ENCODE measurements at regions of chr5 and their contacts with region 1.

Region 1: DNA sequence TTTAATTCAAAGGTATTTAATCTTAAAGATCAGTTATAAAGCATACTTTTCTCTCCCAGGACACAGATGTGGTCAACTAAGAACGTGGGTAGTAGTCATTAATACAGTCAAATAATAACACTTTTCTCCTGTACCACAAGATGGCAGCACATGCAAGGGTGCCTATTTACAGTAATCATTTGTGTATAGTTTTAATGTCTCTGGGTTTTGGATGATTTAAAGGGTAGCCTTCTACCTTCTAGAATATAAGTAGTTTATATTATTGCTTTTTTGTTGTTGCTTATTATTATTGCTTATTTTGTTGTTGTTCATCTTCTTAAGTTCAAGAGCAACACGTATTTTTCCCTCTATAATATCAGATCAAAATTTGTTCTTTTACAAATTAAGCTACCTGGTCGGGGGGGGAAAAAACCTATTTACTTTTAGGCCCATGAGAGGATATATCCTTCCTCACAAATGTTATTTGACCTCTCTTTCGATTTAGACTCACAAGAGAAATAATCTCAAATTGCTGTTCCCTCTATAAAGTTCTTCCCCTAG is 59.6 kb upstream of the SLC27A6 start:
- DNase-seq: peak; percentile 33
- CTCF ChIP-seq: peak; percentile 75

Region 2: GRCh38 chr5:128836571-128836970 is 69.1 kb before region 1 on chr5:
- CTCF ChIA-PET with region 1: no interaction called
- POLR2A ChIA-PET with region 1: no interaction called
- DNase-seq: no peak
- CTCF ChIP-seq: no peak

Region 3: GRCh38 chr5:128895581-128895980 is 10.1 kb before region 1 on chr5:
- CTCF ChIA-PET with region 1: interaction called, 12 read pairs
- POLR2A ChIA-PET with region 1: no interaction called
- DNase-seq: no peak
- CTCF ChIP-seq: no peak

Region 4: DNA sequence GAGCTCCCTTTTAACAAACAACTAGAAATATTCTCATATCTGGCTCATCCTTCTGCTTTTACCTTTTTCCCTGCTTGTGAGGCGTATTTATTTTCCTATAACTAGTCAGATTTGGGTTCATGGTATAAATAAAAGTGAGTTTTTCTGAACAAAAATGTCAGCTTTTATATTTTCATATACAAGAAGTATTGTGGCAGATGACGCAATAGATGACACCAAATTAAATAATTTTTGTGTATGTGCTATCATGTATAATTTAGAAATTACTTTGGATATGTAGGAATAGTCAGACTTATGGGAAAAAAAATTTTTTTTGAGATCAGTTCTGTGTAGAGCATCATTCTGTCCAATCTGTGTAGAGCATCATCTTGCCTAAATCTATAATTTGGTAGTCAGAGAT is 13.9 kb after region 1 on chr5:
- CTCF ChIA-PET with region 1: interaction called, 11 read pairs
- POLR2A ChIA-PET with region 1: no interaction called
- DNase-seq: no peak
- CTCF ChIP-seq: no peak

Region 5: DNA sequence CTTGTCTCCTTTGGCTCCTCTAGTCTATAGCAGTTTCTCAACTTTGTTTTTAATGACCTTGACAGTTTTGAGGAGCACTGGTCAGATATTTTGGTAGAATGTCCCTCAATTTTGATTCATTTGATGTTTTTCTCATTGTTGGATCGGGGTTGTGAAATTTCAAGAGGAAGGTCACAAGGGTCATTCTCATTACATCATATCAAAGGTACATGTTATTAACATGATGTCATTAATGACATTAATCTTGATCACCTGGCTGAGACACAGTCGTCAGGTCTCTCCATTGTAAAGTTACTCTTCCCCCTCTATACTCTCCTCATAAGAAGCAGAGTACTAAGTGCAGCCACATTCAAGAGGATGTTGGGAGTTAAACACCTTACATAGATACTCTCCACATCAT is 196.2 kb after region 1 on chr5:
- CTCF ChIA-PET with region 1: no interaction called
- POLR2A ChIA-PET with region 1: no interaction called
- DNase-seq: no peak
- CTCF ChIP-seq: no peak

Region 6: DNA sequence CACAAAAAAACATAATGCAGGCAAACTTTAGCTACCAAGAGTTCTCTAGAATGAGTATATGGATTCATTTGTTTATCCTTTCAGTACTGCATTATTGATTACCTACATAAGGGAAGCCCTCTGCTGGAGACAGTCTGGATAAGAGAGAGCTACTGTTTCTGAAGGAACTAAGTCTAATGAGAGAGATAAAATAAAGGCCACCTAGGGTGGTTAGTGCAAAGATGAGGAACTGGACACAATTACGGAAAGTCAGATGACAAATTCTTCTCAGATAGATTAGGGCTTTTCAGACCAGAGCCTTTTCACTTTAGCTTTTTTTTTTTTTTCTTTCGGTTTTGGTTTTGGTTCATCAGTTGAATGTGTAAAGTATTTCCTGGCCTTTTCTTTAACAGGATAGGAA is 220.2 kb after region 1 on chr5:
- CTCF ChIA-PET with region 1: interaction called, 35 read pairs
- POLR2A ChIA-PET with region 1: no interaction called
- DNase-seq: peak; percentile 25
- CTCF ChIP-seq: no peak

Region 7: DNA sequence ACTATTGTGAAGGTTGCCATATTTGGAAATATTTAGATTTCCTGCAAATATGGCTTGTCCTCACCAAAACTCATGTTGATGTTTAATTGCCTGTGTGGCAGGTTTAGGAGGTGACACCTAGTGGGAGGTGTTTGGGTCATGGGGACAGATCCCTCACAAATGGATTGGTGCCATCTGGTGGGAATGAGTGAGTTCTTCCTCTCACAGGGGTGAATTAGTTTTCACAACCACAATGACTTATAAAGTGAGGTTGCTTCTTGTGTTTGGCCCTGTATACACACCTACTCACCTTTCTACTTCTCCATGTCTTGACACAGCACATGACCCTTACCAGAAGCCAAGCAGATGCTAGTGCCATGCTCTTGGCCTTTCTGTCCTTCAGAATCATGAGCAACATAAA is 230.0 kb after region 1 on chr5:
- CTCF ChIA-PET with region 1: interaction called, 16 read pairs
- POLR2A ChIA-PET with region 1: no interaction called
- DNase-seq: no peak
- CTCF ChIP-seq: peak; percentile 28